ENCODE measurements at regions of chr7 and their contacts with region 1.

Region 1: DNA sequence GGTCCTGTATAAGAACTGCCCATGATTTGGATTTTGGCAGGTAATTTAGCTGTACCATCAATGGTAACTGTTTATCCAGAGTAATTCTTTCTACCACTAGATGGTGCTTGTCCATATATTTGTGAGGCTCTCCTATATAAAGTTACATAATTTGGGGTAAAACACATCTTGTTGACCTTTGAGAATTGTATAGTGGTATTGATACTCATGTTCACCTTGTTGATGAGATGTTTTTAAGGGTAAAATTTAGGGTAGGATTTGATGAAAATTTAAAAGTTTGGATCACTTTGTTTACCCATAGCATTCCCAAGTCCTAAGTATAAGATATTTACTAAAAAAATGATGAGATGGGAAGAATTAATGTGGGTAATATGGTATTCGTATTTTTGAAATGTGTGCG is 31.6 kb downstream of the ST7 start:
- DNase-seq: no peak
- ATAC-seq: peak; percentile 75
- H3K4me3 ChIP-seq: no peak overlapping the region
- H3K27ac ChIP-seq: no peak overlapping the region
- H3K4me1 ChIP-seq: peaks cover 24% of the 10 kb centered on the region
- H3K27me3 ChIP-seq: no peaks in the 10 kb centered on the region
- CTCF ChIP-seq: peak; percentile 54 to 64 (median 59); a peak in 5 of 6 replicates
- EP300 ChIP-seq: no peak
- POLR2A ChIP-seq: no peak
- RAD21 ChIP-seq: peak; percentile 66

Region 2: DNA sequence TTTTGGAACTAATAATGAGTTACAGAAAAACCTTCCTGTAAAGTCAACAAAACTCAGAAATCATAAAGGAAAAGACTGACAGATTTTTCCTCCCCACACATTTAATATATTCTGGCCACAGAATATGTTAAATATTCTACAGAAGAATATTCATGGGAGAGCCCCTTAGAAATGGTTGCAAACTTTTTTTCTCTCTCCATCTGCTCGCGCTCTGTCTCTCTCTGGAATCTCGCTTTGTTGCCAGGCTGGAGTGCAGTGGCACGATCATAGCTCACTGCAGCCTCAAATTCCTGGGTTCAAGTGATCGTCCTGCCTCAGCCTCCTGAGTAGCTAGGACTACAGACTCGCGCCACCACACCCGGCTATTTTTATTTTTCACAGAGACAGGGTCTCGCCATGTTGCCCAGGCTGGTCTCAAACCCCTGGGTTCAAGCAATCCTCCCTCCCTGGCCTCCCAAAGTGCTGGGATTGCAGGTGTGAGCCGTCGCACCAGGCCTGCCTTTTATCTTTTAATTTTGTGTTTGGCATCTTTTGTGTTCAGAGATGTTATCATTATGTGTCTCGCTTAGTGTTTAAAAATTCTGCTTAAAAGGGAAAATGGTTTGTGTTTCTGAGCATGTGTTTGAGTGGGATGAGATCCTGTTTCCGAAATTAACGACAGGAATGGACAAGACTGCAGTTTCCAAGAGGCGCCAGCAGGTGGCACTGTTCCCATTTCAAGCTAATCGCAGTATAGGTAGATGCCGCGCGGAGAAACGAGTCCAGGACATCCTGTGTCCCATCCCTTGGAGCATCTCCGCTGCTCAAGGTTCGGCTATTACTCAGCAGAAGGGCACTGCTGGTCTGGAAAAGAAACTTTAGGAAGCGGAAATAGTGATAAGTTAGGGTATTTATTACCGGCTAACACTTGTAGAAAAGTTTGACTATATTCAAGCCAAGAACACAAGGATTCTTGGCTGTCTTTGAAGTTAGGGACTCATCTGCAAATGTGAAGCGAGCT is 54.7 kb before region 1 on chr7:
- CTCF ChIA-PET with region 1: interaction called, 123 read pairs
- POLR2A ChIA-PET with region 1: interaction called, 4 read pairs
- RAD21 ChIA-PET with region 1: interaction called, 49 read pairs
- SMC1A ChIA-PET with region 1: interaction called, 42 read pairs
- in situ Hi-C with region 1: no loop called
- intact Hi-C with region 1: loop called (anchors 2 kb)
- DNase-seq: peak; percentile 44
- ATAC-seq: peak; percentile 95
- H3K4me3 ChIP-seq: no peak overlapping the region
- H3K27ac ChIP-seq: no peak overlapping the region
- H3K4me1 ChIP-seq: peaks cover 5% of the 10 kb centered on the region
- H3K27me3 ChIP-seq: no peaks in the 10 kb centered on the region
- CTCF ChIP-seq: peak; percentile 83 to 95 (median 88)
- EP300 ChIP-seq: no peak
- POLR2A ChIP-seq: no peak
- RAD21 ChIP-seq: peak; percentile 99

Region 3: DNA sequence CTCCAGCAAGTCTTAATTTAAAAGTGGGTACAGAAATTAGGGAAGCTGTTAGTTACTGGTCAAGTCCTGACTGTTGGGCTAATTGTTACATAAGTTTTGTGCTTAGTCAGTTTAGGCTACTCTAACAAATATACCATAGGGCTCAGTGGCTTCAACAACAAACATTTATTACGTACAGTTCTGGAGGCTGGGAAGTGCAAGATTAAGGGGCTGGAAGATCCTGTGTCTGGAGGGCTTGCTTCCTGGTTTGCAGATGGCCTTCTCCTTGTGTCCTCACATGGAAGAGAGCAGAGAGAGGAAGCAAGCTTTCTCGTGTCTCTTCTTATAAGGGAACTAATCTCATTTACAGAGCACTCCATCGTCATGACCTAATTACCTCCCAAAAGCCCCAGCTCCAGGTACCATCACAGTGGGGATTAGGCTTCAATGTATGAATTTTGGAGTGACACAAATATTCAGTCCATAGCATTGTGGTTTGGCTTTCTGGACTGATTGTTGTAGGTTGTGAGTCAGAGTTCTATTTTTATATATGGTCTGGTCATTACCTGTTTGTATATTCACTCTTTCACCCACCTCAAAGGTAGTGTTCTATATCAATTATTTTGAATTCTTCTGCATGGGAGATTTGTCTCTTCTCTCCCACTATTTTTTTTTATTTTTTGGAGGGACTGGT is 14.5 kb before region 1 on chr7:
- CTCF ChIA-PET with region 1: interaction called, 52 read pairs
- POLR2A ChIA-PET with region 1: interaction called, 6 read pairs
- RAD21 ChIA-PET with region 1: interaction called, 7 read pairs
- SMC1A ChIA-PET with region 1: interaction called, 40 read pairs
- in situ Hi-C with region 1: no loop called
- intact Hi-C with region 1: no loop called
- DNase-seq: no peak
- ATAC-seq: peak; percentile 87
- H3K4me3 ChIP-seq: peak overlapping the region; percentile 20; the same call in 1 of the 2 replicates
- H3K27ac ChIP-seq: peak overlapping the region; percentile 57
- H3K4me1 ChIP-seq: peaks cover 21% of the 10 kb centered on the region
- H3K27me3 ChIP-seq: no peaks in the 10 kb centered on the region
- CTCF ChIP-seq: no peak
- EP300 ChIP-seq: peak in 1 of 2 experiments; percentile 24; a peak in 1 of 4 replicates
- POLR2A ChIP-seq: no peak
- RAD21 ChIP-seq: no peak

Region 4: GRCh38 chr7:117014673-117015133 is 29.8 kb after region 1 on chr7:
- CTCF ChIA-PET with region 1: interaction called, 287 read pairs
- POLR2A ChIA-PET with region 1: interaction called, 5 read pairs
- RAD21 ChIA-PET with region 1: interaction called, 112 read pairs
- SMC1A ChIA-PET with region 1: interaction called, 223 read pairs
- in situ Hi-C with region 1: no loop called
- intact Hi-C with region 1: loop called (anchors 1 kb)
- DNase-seq: no peak
- ATAC-seq: peak; percentile 52
- H3K4me3 ChIP-seq: peak overlapping the region; percentile 66; the same call in 1 of the 2 replicates
- H3K27ac ChIP-seq: peak overlapping the region; percentile 79
- H3K4me1 ChIP-seq: peaks cover 43% of the 10 kb centered on the region
- H3K27me3 ChIP-seq: no peaks in the 10 kb centered on the region
- CTCF ChIP-seq: no peak
- EP300 ChIP-seq: no peak
- POLR2A ChIP-seq: peak; percentile 51; the same call in 1 of the 2 replicates
- RAD21 ChIP-seq: no peak

Region 5: DNA sequence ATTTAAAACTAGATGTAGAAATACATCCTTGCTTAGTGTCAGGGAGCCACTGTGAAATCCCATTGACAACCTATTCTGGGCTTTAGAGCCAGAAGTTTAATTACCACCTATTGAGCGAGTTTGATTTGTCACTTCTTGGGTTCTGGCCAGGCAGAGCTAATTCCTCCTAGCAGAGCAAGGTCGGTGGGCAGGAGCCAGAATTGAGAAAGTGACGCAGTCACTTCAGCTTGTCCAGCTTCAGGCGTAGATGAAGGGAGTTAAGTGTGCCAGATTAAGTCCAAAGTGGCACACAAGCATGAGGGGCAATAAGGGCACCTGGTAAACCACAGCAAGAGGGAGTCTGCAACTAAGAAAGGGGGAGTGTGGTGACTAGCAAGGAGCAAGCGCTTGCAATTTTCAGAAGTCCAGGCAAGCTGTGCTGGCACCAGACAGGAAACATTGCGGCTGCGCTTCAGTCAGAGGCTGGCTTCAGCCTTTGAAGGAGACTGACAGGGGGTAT is 87.8 kb after region 1 on chr7:
- CTCF ChIA-PET with region 1: interaction called, 10 read pairs
- POLR2A ChIA-PET with region 1: no interaction called
- RAD21 ChIA-PET with region 1: interaction called, 4 read pairs
- SMC1A ChIA-PET with region 1: interaction called, 6 read pairs
- in situ Hi-C with region 1: no loop called
- intact Hi-C with region 1: no loop called
- DNase-seq: no peak
- ATAC-seq: no peak
- H3K4me3 ChIP-seq: no peak overlapping the region
- H3K27ac ChIP-seq: no peak overlapping the region
- H3K4me1 ChIP-seq: peaks cover 5% of the 10 kb centered on the region; the same call in 1 of the 2 replicates
- H3K27me3 ChIP-seq: no peaks in the 10 kb centered on the region
- CTCF ChIP-seq: no peak
- EP300 ChIP-seq: no peak
- POLR2A ChIP-seq: no peak
- RAD21 ChIP-seq: no peak

Region 6: DNA sequence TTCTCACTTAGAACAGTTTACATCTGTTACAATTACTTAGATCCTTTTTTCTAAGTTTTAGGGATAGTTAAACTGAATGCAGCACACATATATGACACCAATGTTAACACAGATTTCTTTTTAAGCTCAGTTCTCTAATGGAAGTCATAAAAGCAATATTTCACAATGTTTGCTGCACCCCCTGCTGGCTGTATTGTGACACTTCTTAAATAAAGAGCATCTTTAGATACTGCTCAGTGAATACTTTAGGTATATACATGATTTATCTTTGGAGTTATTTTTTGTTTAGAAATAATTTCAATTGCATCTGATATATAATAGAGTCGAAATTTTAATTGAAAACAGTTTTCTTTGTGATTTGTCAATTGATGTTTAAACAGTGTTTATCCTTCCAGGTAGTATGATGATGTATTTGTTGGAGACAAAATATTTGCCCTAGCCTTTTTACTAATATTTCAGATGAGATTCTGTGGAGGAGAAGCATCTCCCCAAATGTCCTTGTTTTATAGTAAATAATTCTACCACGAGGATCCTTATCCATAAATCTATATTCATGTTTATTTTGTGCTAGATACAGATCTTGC is 142.8 kb after region 1 on chr7:
- CTCF ChIA-PET with region 1: interaction called, 827 read pairs
- POLR2A ChIA-PET with region 1: interaction called, 8 read pairs
- RAD21 ChIA-PET with region 1: interaction called, 379 read pairs
- SMC1A ChIA-PET with region 1: interaction called, 527 read pairs
- in situ Hi-C with region 1: no loop called
- intact Hi-C with region 1: loop called (anchors 2 kb)
- DNase-seq: peak; percentile 23
- ATAC-seq: peak; percentile 82
- H3K4me3 ChIP-seq: no peak overlapping the region
- H3K27ac ChIP-seq: no peak overlapping the region
- H3K4me1 ChIP-seq: peaks cover 10% of the 10 kb centered on the region
- H3K27me3 ChIP-seq: no peaks in the 10 kb centered on the region
- CTCF ChIP-seq: peak; percentile 56 to 66 (median 64); a peak in 5 of 6 replicates
- EP300 ChIP-seq: no peak
- POLR2A ChIP-seq: no peak
- RAD21 ChIP-seq: peak; percentile 72

Region 7: GRCh38 chr7:117169907-117170306 is 185.0 kb after region 1 on chr7:
- CTCF ChIA-PET with region 1: no interaction called
- POLR2A ChIA-PET with region 1: no interaction called
- RAD21 ChIA-PET with region 1: no interaction called
- SMC1A ChIA-PET with region 1: no interaction called
- in situ Hi-C with region 1: no loop called
- intact Hi-C with region 1: no loop called
- DNase-seq: no peak
- ATAC-seq: no peak
- H3K4me3 ChIP-seq: no peak overlapping the region
- H3K27ac ChIP-seq: no peak overlapping the region
- H3K4me1 ChIP-seq: no peaks in the 10 kb centered on the region
- H3K27me3 ChIP-seq: no peaks in the 10 kb centered on the region
- CTCF ChIP-seq: no peak
- EP300 ChIP-seq: no peak
- POLR2A ChIP-seq: no peak
- RAD21 ChIP-seq: no peak

Measured in GM12878 (cell line).